Thyroid gland (tissue), 4 donors: ENCODE measurements at regions of chr18 and their contacts with region 1.

Region 1: DNA sequence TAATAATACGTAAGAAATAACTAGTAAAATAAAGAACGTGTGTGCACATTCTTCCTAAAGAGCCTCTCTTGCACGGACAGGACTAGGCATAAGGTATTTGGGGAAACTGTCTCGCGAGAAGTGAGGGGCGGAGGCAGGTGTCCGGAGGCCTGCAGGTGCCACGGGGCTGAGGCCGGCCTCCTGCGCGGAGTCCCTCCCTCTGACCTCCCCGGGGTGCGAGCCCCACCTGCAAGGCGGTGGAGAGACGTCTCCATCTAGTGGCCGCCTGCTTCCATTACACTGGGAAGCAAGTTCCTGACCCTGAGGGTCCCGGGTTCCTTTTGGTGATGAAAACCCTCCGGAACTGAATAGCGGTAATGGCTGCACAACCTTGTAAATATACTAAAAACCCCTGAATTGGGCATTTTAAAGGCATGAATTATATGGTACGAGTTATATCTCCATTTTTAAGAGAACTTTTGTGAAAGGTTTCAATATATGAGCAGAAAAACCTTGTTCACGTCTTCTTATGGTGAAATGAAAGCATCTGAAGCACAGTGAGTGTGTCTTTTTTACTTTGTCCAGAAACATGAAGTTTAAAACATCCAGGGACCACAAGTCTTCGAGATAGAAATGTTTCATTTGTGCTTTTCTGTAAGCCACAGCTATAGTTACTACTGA is 35.5 kb upstream of the CTDP1 start:
- DNase-seq: peak; percentile 50 to 60
- H3K4me3 ChIP-seq: no peak overlapping the region
- H3K27ac ChIP-seq: no peak overlapping the region
- H3K4me1 ChIP-seq: no peaks in the 10 kb centered on the region
- H3K27me3 ChIP-seq: no peaks in the 10 kb centered on the region
- CTCF ChIP-seq: peak; percentile 87 to 99 (median 90)
- POLR2A ChIP-seq: no peak

Region 2: GRCh38 chr18:79528846-79529245 is 115.3 kb before region 1 on chr18:
- intact Hi-C with region 1: loop called (anchors 10 kb)
- DNase-seq: peak; percentile 61 to 64
- H3K4me3 ChIP-seq: no peak overlapping the region
- H3K27ac ChIP-seq: no peak overlapping the region
- H3K4me1 ChIP-seq: peaks cover 4 to 9% of the 10 kb centered on the region in 2 donors
- H3K27me3 ChIP-seq: no peaks in the 10 kb centered on the region
- CTCF ChIP-seq: peak; percentile 58 to 89 (median 74)
- POLR2A ChIP-seq: no peak